A673 (cell line): ENCODE measurements at regions of chr15 and their contacts with region 1.

Region 1: DNA sequence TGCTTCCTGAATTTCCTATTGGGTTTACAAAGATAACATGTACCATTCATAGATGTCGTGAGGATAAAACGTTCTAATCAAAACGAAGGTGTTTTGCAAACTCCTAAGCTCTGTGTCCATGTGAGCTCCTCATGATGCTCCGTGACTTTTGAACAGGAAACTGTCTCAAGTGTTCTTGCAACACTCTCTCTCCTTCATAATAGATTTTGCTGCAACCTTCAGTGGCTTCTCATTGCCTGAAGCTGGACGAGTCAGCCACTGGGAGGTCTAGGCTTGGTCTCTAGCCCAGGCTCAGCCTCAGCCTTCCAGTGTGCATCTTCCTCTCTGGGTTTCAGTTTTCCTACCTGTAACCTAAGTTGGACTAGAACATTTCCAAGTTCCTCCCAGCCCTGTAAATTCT is 18.7 kb upstream of the BCL2A1 start:
- DNase-seq: no peak
- H3K4me3 ChIP-seq: no peak overlapping the region
- H3K27ac ChIP-seq: no peak overlapping the region
- H3K4me1 ChIP-seq: no peaks in the 10 kb centered on the region
- H3K27me3 ChIP-seq: peaks cover 5% of the 10 kb centered on the region
- CTCF ChIP-seq: no peak

Region 2: GRCh38 chr15:79339564-79340314 is 649.9 kb before region 1 on chr15:
- CTCF ChIA-PET with region 1: interaction called, 6 read pairs
- POLR2A ChIA-PET with region 1: no interaction called
- intact Hi-C with region 1: loop called (anchors 10 kb)
- DNase-seq: peak; percentile 58
- H3K4me3 ChIP-seq: no peak overlapping the region
- H3K27ac ChIP-seq: no peak overlapping the region
- H3K4me1 ChIP-seq: no peaks in the 10 kb centered on the region
- H3K27me3 ChIP-seq: no peaks in the 10 kb centered on the region
- CTCF ChIP-seq: peak; percentile 77

Region 3: DNA sequence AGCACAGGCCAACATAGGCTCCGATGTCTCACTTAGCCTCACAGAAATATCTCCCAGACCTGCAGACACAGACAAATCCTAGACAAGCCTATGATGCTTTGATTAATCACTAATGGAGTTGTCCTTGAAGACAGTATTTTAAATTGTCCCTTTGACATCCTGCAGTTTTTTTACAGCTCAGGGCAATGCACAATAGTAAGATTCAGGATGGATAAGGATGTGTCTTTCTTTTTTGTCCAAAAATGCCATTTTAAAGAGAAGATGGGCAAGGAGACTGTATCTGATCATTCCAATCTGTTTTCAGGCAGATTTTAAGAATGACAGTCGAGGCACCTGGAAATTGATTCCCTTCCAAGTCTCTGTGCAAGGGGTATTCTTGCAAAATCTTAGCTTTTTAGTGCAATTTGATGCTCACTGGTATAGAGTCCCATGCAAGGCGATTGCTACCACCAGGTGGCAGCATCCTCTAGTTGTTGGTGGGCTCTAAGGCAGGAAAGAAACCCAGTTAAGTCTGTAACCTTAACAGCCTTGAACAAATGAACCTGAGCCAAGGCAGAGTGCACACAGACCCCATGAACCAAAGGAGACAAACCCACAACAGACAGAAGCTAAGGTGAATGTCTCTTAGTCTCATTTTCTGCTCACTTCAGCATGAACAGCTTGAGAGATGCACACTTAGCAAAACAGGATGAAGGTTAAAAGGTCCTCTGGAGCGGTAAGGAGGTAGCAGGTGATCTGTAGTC is 608.8 kb before region 1 on chr15:
- CTCF ChIA-PET with region 1: no interaction called
- POLR2A ChIA-PET with region 1: no interaction called
- intact Hi-C with region 1: loop called (anchors 2 kb)
- DNase-seq: peak; percentile 79
- H3K4me3 ChIP-seq: no peak overlapping the region
- H3K27ac ChIP-seq: no peak overlapping the region
- H3K4me1 ChIP-seq: no peaks in the 10 kb centered on the region
- H3K27me3 ChIP-seq: no peaks in the 10 kb centered on the region
- CTCF ChIP-seq: peak; percentile 85

Region 4: DNA sequence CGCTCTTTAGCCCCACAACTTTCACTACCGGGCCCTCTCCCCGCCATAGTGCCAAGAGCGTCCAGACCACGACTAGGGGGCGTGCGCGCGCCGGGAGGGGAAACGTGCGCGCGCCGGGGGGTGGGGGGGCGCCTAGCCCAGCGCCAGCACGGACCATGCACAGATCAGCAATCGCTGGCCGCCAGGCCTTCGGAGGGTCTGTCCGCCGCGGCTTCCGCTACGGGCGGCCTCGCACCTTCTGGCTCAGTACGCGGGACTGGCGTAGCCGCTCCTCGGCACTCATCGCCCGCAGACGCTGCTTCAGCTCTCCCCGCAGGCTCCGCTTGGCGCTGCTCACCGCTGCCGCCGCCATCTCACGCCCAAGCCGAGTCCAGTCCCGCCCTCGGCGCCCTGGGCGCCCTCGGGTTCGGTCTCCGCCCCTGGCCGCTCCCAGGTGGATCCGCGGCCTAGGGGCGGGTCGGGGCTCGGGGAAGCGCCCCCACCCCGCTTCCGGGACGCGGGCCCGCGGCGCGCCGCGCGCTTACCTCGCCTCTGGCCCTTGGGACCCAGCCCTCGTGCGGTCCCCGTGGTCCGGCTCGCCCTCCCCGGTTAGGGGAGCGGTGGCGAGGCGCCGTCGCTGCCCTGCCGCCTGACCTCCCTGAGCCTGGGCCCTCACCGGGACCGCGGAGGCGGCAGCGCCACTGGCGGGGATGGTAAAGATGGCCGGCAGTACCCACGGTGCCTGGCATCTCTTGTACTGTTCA is 92.9 kb before region 1 on chr15 and contains the start of gene MTHFS:
- CTCF ChIA-PET with region 1: interaction called, 3 read pairs
- POLR2A ChIA-PET with region 1: no interaction called
- intact Hi-C with region 1: loop called (anchors 5 kb)
- DNase-seq: peak; percentile 80
- H3K4me3 ChIP-seq: peak within 1 kb of the TSS; percentile 89
- H3K27ac ChIP-seq: peak within 1 kb of the TSS; percentile 92
- H3K4me1 ChIP-seq: no peaks in the 10 kb centered on the region
- H3K27me3 ChIP-seq: no peaks in the 10 kb centered on the region
- CTCF ChIP-seq: peak; percentile 74
- total RNA-seq, gene MTHFS: 8.7 and 9.4 TPM in 2 replicates

Region 5: GRCh38 chr15:80173022-80173759 is 183.5 kb after region 1 on chr15:
- CTCF ChIA-PET with region 1: no interaction called
- POLR2A ChIA-PET with region 1: no interaction called
- intact Hi-C with region 1: loop called (anchors 10 kb)
- DNase-seq: peak; percentile 58
- H3K4me3 ChIP-seq: no peak overlapping the region
- H3K27ac ChIP-seq: no peak overlapping the region
- H3K4me1 ChIP-seq: no peaks in the 10 kb centered on the region
- H3K27me3 ChIP-seq: no peaks in the 10 kb centered on the region
- CTCF ChIP-seq: peak; percentile 79